Right ventricle myocardium superior (tissue), 1 donor: ENCODE measurements at regions of chr2 and their contacts with region 1.

Region 1: DNA sequence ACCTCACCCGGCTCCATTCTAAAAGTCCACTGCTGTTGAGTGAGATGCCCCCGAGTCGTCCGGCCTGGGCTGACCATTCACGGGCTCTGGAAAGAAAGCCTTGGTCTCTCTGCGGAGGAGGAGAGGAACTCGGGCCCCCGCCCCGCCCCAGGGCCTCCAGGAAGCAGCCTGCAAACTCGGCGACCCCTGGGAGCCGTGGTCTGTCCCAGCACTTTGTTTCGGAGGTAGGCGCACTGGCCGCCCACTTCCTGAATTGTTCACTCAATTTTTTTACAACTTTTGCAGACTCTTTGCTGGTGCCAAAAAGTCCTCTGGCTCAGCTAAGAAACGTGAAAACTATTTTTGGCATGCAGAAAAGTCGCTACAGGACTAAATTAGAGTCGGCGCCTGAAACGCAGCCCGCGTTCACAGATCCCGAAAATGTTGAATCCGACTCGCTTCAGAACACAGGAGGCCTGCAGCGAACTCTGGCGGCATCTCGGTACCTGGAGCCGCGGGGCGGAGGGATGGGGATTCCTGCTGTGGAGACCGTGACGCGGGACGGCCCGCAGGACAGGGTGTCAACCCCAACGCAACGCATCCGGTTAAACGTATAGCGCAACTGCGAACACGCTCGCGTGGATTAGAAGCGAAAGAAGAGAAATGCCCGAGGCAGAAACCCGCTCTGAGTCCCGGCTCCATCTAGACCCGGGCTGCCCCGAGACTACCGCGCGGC is 1.5 kb downstream of the PXDN start:
- DNase-seq: peak; percentile 86
- ATAC-seq: peak; percentile 74

Region 2: DNA sequence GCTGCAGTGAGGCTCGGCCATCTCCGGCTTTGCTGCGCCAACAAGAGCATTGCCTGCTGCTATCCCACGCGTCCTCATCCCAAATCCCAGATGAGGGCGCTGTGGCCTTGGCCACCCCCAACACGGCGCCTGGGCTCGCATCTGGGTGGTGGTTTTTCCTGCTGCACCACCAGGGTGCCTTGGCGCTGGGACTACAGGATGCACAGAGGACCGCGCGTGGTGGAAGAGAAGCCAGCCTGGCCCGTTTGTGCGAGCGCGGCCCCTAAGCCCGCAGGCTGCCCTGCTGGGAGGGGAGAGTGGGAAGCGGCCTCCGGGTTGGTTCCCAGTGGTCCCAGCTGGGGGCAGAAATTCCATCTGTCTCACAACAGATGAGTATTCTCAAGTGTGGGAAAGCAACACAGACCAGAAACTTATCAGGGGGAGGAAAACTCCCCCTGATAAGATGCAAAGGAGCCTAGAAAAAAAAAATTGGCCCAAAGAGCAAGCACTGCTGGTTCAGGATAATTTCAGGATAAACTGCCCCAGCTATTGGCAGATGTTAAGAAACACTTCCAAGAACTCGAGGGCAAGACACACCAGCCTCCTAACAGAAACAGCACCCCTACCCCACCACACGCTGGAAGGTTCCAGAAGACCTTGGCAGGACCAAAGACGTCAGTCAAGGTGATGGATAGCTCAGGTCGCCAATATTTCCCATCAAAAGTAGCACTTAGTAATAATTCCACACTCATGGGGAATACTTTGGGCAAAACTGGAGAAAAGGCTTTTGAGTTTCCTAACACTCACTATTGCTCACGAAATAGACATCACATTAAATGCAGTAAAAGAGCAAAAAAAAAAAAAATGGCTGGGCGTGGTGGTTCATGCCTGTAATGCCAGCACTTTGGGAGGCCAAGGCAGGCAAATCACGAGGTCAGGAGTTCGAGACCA is 150.6 kb before region 1 on chr2:
- intact Hi-C with region 1: loop called (anchors 5 kb)
- DNase-seq: peak; percentile 82
- ATAC-seq: peak; percentile 77

Region 3: DNA sequence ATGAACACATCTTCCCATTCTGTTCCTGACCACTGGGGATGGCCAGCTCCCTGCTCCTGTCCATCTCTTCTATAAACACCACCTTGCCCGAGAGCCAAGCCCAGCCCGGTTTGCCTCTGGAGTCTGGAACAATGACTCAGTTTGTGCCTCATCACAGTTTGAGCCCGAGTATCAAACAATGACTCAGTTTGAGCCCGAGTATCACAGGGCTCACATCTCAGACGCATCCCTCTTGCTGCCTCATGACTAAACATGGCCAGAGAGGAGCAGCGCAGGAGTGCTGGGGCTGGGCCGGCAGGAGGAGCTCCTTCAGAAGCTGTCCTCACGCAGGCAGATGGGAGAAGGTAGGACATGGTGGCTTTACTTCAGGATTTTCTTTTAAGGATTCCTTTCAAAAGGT is 67.2 kb before region 1 on chr2:
- intact Hi-C with region 1: loop called (anchors 10 kb)
- DNase-seq: no peak
- ATAC-seq: no peak

Region 4: GRCh38 chr2:1910592-1911246 is 167.9 kb after region 1 on chr2:
- intact Hi-C with region 1: no loop called
- DNase-seq: no peak
- ATAC-seq: peak; percentile 46

Region 5: GRCh38 chr2:2039826-2040225 is 297.0 kb after region 1 on chr2:
- intact Hi-C with region 1: no loop called
- DNase-seq: no peak
- ATAC-seq: no peak